A549 (cell line): ENCODE measurements at regions of chr2 and their contacts with region 1.

Region 1: GRCh38 chr2:42392191-42392590 is 31.2 kb upstream of the COX7A2L start:
- DNase-seq: no peak
- ATAC-seq: no peak
- H3K4me3 ChIP-seq: no peak overlapping the region
- H3K27ac ChIP-seq: no peak overlapping the region
- H3K4me1 ChIP-seq: no peaks in the 10 kb centered on the region
- CTCF ChIP-seq: no peak
- EP300 ChIP-seq: no peak
- POLR2A ChIP-seq: no peak
- RAD21 ChIP-seq: no peak

Region 2: DNA sequence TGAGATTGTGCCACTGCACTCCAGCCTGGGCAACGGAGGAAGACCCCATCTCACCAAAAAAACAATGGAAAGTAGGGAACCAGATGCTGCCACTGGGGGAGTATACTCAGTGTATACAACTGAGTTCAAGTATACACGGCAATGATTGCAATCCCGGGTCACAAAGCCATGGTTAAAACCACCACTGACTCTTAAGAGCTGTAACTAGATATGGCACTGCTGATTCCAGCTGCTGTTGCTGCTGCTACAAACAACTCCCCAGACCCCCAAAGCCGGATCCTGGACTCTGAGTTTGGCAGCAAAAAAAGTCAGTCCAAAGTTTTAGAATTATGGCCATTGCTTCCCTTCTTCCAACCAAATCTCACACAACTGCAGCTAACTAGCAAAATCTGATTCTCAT is 12.5 kb after region 1 on chr2:
- CTCF ChIA-PET with region 1: interaction called, 5 read pairs
- POLR2A ChIA-PET with region 1: interaction called, 12 read pairs
- DNase-seq: no peak
- ATAC-seq: peak in 1 of 2 experiments; percentile 41; a peak in 2 of 6 replicates
- H3K4me3 ChIP-seq: no peak overlapping the region
- H3K27ac ChIP-seq: no peak overlapping the region
- H3K4me1 ChIP-seq: no peaks in the 10 kb centered on the region
- CTCF ChIP-seq: no peak
- EP300 ChIP-seq: no peak
- POLR2A ChIP-seq: no peak
- RAD21 ChIP-seq: no peak